Sciatic nerve (tissue), 2 donors: ENCODE measurements at regions of chr15 and their contacts with region 1.

Region 1: GRCh38 chr15:99359769-99360168 is 108.5 kb downstream of the LRRC28 start:
- DNase-seq: no peak
- ATAC-seq: no peak

Region 2: DNA sequence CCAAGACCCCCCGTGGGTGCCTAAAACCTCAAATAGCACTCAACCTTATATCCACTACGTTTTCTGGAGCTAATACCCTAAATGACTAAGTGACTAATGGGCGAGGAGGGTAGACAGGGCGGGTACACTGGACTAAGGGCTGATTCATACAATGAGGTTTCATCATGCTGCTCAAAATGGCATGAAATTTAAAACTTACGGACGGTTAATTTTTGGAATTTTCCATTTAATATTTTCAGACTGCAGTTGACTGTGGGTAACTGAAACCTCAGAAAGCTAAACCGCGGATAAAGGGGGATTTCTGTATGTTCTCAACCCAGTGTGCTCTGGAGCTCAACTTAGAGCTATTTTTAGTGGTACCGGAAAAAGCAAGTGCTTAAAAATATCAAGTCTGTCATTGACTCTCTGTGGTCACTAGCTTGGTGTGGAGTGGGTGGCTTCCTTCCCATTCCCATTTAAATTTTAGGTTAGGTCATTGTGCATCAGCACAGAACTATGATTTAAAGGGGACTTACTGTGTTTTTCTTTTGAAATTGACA is 35.6 kb before region 1 on chr15:
- intact Hi-C with region 1: no loop called
- DNase-seq: no peak
- ATAC-seq: no peak

Region 3: DNA sequence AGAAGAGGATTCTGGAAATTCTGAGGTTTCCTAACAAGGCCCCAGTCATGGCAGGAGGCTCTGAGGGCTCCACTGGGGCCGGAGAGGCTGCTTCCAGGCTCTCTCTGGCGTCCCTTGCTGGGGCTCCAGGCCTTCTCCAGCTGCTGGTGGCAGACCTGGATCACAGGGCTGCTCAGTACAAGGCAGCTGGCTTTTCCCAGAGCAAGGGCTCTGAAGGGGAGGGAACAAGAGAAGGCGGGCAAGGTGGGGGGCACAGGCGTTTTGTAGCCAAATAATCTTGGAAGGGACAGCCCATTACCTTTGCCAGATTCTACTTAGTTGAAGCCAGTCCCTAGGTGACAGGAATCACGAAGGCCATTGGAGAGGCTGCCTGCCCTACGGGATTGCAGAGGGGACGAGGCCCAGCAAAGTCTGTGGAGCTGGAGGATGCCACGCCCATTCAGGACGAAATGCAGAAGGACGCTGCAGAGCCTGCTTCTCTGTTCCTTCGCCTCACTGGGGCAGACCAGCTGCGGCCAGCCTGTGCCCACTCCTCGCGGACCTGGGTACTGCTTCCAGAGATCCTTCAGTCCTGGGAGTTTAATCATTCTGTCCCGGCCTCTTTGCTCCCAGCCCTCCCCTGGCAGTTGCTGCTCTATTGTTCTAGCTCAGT is 56.5 kb after region 1 on chr15:
- intact Hi-C with region 1: loop called (anchors 1 kb)
- DNase-seq: peak; percentile 54
- ATAC-seq: no peak